Left lung (tissue), 14 donors: ENCODE measurements at regions of chr21 and their contacts with region 1.

Region 1: DNA sequence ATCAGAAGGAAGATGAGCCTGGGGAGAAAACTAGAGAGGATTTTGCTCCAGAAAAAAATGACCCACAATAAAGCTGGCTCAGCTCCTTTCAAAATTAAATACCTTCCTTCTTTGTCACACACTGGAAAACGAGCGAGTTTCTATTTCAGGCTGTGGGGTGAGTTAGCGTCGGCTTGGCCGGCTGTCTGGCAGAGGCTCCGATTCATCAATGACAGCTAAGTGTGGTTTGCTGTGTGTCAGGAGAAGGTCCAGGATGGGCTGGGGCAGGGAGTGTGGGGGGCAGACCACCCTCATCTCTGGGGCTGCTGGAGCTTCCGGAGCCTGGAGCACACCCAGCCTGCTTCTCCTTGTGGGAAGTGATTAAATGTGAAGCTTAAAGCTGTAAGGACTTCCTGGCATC is 120.2 kb downstream of the ETS2 start:
- DNase-seq: peak; percentile 76 to 93 (median 84)
- ATAC-seq: peak; percentile 83
- H3K4me3 ChIP-seq: peak overlapping the region in 1 of 2 donors; percentile 28
- H3K27ac ChIP-seq: peak overlapping the region; percentile 62 to 81
- H3K4me1 ChIP-seq: peaks cover 22 to 52% of the 10 kb centered on the region in 2 donors
- H3K27me3 ChIP-seq: no peaks in the 10 kb centered on the region
- CTCF ChIP-seq: no peak

Region 2: DNA sequence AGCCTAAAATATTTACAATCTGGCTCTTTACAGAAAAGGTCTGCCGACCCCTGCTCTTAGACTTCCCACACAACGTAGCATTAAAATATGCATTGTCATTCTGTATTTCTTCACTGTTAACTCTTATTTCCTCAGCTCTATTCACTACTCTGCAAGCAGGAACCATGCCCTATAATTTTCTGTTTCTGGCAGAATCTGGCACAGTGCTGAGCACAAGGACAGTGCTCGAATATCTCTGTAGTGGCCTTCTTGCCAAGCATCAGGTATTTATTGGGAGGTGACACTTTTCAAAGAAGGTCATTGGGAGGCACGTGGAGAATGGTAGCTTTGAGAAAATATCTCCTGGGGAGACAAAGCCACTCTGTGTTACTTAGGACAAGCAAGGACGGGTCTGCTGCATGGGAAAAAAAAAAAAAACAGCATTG is 179.4 kb after region 1 on chr21:
- intact Hi-C with region 1: loop called in 1 of 2 experiments (anchors 10 kb)
- DNase-seq: no peak
- ATAC-seq: peak; percentile 42
- H3K4me3 ChIP-seq: peak overlapping the region in 1 of 2 donors; percentile 7
- H3K27ac ChIP-seq: peak overlapping the region in 1 of 2 donors; percentile 87
- H3K4me1 ChIP-seq: peaks cover 7 to 35% of the 10 kb centered on the region in 2 donors
- H3K27me3 ChIP-seq: no peaks in the 10 kb centered on the region
- CTCF ChIP-seq: no peak

Region 3: GRCh38 chr21:39125752-39126485 is 200.0 kb after region 1 on chr21:
- intact Hi-C with region 1: no loop called
- DNase-seq: peak in 2 of 4 donors; percentile 30 to 82
- ATAC-seq: peak; percentile 100
- H3K4me3 ChIP-seq: no peak overlapping the region
- H3K27ac ChIP-seq: no peak overlapping the region
- H3K4me1 ChIP-seq: peaks cover 0 to 12% of the 10 kb centered on the region in 2 donors
- H3K27me3 ChIP-seq: no peaks in the 10 kb centered on the region
- CTCF ChIP-seq: peak; percentile 48 to 52